Dorsolateral prefrontal cortex (tissue), 120 donors: ENCODE measurements at regions of chrX and their contacts with region 1.

Region 1: DNA sequence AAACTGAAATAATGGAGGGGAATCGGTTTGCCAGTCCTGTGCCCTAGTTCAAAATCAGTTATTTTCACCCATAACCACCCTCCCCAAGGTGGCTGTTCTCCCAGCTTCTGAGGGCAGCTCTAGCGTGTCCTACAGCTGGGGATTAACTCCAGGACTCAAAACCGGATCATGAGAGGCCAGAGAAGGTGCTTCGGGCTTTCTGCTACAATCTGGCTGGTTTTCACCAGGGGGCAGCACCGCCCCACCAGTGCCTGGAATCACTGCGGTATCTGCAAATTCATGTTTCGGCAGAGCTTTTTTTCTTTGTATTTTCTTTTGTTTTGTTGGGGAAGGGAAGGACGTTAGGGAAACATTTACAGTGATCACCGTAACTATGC is 28.4 kb downstream of the PDHA1 start:
- DNase-seq: peak in 9 of 10 donors; percentile 38 to 73 (median 58)
- H3K4me3 ChIP-seq: peak overlapping the region; percentile 9 to 69 (median 49)
- H3K27ac ChIP-seq: peak overlapping the region in 2 of 59 donors; percentile 5 to 10
- H3K27me3 ChIP-seq: peaks cover 0 to 48% (median 13%) of the 10 kb centered on the region in 45 donors
- CTCF ChIP-seq: peak; percentile 17 to 76 (median 65)

Region 2: DNA sequence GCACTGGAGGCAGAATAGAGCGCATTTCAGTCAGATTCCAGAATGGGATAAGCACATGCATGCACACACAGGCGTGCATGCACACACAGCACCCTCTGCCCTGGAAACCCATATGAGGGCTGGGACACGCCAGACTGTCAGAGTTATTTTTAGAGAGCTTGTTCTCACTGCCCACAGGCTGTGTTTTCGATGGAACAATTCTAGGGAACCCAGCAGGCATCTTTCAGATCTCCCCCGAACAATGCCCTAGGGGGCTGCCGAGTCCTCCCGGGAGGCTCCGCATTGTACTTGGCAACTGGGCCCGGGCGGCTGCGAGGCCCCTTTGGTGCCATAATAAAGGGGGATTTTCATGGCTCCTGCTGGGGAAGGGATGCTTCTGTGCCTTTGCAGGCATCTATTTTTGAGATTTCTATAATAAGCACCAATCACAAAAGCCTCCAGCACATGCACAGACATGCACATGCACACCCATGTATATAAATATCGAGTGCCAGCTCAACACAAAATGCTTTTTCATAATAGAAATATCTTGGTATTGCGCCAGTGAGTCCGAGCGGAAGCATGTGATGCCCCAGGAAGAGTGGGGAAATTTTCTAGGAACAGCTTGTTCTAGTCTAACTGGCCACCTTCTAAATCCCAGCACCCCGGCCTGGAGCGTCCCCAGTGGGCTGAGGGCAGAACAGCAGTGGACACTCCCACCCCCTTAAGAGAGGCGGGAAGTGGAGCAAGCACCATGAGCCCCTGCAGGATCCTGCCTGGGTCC is 476.8 kb before region 1 on chrX:
- intact Hi-C with region 1: no loop called
- DNase-seq: peak in 1 of 10 donors; percentile 26
- H3K4me3 ChIP-seq: no peak overlapping the region
- H3K27ac ChIP-seq: peak overlapping the region in 53 of 59 donors; percentile 11 to 90 (median 67)
- H3K27me3 ChIP-seq: peaks cover 0 to 64% (median 6%) of the 10 kb centered on the region in 45 donors
- CTCF ChIP-seq: peak in 22 of 56 donors; percentile 5 to 47 (median 26)

Region 3: DNA sequence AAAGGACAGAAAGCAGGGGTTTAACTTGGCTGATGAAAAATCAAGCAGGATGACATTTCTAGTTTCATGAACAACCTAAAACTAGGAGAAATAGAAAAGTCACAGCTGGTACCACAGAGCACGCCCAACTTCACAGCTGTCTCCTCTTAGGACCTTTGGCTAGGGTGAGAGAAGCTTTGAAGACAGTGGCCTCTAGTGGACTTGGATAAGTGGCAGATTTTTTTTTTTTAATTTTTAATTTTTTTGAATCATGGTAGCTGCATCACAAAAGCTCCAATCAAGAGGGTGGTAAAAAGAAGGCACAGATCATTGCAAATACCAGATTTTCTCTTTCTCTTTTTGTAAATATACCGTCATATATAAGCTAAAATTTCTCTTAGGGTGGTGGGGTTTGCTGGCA is 163.3 kb after region 1 on chrX:
- intact Hi-C with region 1: loop called (anchors 5 to 10 kb)
- DNase-seq: no peak
- H3K4me3 ChIP-seq: no peak overlapping the region
- H3K27ac ChIP-seq: peak overlapping the region in 1 of 59 donors; percentile 10
- H3K27me3 ChIP-seq: peaks cover 0 to 44% (median 5%) of the 10 kb centered on the region in 45 donors
- CTCF ChIP-seq: peak in 43 of 56 donors; percentile 12 to 54 (median 32)

Region 4: GRCh38 chrX:20128670-20129069 is 756.5 kb after region 1 on chrX:
- intact Hi-C with region 1: loop called in 1 of 2 experiments (anchors 10 kb)
- DNase-seq: no peak
- H3K4me3 ChIP-seq: no peak overlapping the region
- H3K27ac ChIP-seq: no peak overlapping the region
- H3K27me3 ChIP-seq: no peaks in the 10 kb centered on the region
- CTCF ChIP-seq: no peak